ENCODE measurements at regions of chr7 and their contacts with region 1.

Region 1: GRCh38 chr7:148884299-148885022 is 370 bp upstream of the EZH2 start:
- DNase-seq: peak; percentile 95
- ATAC-seq: peak; percentile 93
- H3K4me3 Mint-ChIP-seq: peak overlapping the region; percentile 87
- H3K27ac Mint-ChIP-seq: peak overlapping the region; percentile 82
- H3K4me1 Mint-ChIP-seq: peaks cover 26% of the 10 kb centered on the region
- H3K27me3 Mint-ChIP-seq: no peaks in the 10 kb centered on the region
- CTCF ChIP-seq: no peak

Region 2: GRCh38 chr7:148799893-148800545 is 84.4 kb before region 1 on chr7:
- CTCF ChIA-PET with region 1: no interaction called
- POLR2A ChIA-PET with region 1: no interaction called
- intact Hi-C with region 1: no loop called
- DNase-seq: no peak
- ATAC-seq: no peak
- H3K4me3 Mint-ChIP-seq: no peak overlapping the region
- H3K27ac Mint-ChIP-seq: no peak overlapping the region
- H3K4me1 Mint-ChIP-seq: no peaks in the 10 kb centered on the region
- H3K27me3 Mint-ChIP-seq: no peaks in the 10 kb centered on the region
- CTCF ChIP-seq: no peak

Region 3: DNA sequence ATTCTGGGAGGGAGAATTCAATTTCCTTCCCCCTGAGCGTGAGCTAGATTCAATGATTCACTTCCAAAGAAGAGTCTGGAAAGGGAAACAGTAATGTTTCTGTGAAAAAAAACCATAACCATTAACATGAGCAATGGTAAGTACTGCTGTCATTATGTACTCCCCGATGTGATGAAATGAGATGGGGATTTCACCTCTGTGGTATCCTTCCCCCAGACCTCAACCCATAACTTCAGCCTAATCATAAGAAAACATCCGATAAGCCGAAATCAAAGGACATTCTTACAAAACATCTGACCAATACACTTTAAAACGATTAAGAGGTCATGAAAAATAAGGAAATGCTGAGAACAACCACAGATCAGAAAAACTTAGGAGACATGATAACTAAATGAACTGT is 27.6 kb before region 1 on chr7:
- CTCF ChIA-PET with region 1: interaction called, 9 read pairs
- POLR2A ChIA-PET with region 1: interaction called, 5 read pairs
- intact Hi-C with region 1: loop called (anchors 2 kb)
- DNase-seq: no peak
- ATAC-seq: no peak
- H3K4me3 Mint-ChIP-seq: no peak overlapping the region
- H3K27ac Mint-ChIP-seq: no peak overlapping the region
- H3K4me1 Mint-ChIP-seq: peaks cover 11% of the 10 kb centered on the region
- H3K27me3 Mint-ChIP-seq: no peaks in the 10 kb centered on the region
- CTCF ChIP-seq: no peak

Region 4: GRCh38 chr7:148914208-148914777 is 29.8 kb after region 1 on chr7:
- CTCF ChIA-PET with region 1: no interaction called
- POLR2A ChIA-PET with region 1: interaction called, 8 read pairs
- intact Hi-C with region 1: loop called (anchors 1 kb)
- DNase-seq: no peak
- ATAC-seq: peak; percentile 38
- H3K4me3 Mint-ChIP-seq: peak overlapping the region; percentile 57
- H3K27ac Mint-ChIP-seq: peak overlapping the region; percentile 75
- H3K4me1 Mint-ChIP-seq: peaks cover 42% of the 10 kb centered on the region
- H3K27me3 Mint-ChIP-seq: no peaks in the 10 kb centered on the region
- CTCF ChIP-seq: no peak

Region 5: DNA sequence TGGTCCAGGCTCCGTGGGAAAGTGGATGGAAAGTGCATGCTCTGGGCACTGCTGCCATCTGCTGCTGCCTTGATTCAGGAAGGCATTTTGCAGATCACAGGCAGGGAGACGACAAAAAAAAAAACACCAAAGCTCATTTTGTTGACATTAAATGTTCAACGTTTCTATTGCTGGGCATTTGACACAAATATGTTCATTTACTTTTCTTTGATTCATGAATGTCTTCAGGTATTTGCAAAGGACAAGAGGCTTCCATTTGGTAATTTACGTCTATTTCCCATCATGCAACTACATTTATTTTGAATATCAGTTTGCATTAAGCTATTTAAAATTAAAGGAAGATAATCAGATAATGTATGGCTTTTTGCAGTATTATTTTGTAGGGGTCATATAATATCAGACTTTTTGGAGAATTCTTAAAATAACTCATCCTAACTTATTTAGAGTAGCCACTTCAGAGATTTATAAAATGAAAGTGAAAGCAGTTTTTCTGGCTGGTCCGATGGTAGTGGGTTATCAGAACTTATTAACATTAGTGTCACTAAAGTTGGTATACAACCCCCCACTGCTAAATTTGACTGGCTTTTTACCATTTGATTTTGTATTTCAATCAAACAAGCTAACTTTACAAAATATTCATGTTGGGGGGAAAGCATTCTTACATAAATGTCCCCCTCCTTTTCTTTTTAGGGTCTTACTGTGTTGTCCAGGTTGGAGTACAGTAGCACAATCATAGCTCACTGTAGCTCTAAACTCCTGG is 78.5 kb after region 1 on chr7:
- CTCF ChIA-PET with region 1: interaction called, 3 read pairs
- POLR2A ChIA-PET with region 1: no interaction called
- intact Hi-C with region 1: loop called (anchors 1 kb)
- DNase-seq: no peak
- ATAC-seq: peak; percentile 53
- H3K4me3 Mint-ChIP-seq: peak overlapping the region; percentile 93
- H3K27ac Mint-ChIP-seq: peak overlapping the region; percentile 87
- H3K4me1 Mint-ChIP-seq: peaks cover 29% of the 10 kb centered on the region
- H3K27me3 Mint-ChIP-seq: no peaks in the 10 kb centered on the region
- CTCF ChIP-seq: no peak

Region 6: GRCh38 chr7:149028346-149029109 is 144.1 kb after region 1 on chr7 and contains the start of gene PDIA4:
- CTCF ChIA-PET with region 1: no interaction called
- POLR2A ChIA-PET with region 1: no interaction called
- intact Hi-C with region 1: loop called (anchors 1 kb)
- DNase-seq: peak; percentile 99
- ATAC-seq: peak; percentile 87
- H3K4me3 Mint-ChIP-seq: peak within 1 kb of the TSS; percentile 92
- H3K27ac Mint-ChIP-seq: peak within 1 kb of the TSS; percentile 89
- H3K4me1 Mint-ChIP-seq: peaks cover 39% of the 10 kb centered on the region
- H3K27me3 Mint-ChIP-seq: no peaks in the 10 kb centered on the region
- CTCF ChIP-seq: no peak
- total RNA-seq, gene PDIA4: 57.4 and 59.4 TPM in 2 replicates

Region 7: DNA sequence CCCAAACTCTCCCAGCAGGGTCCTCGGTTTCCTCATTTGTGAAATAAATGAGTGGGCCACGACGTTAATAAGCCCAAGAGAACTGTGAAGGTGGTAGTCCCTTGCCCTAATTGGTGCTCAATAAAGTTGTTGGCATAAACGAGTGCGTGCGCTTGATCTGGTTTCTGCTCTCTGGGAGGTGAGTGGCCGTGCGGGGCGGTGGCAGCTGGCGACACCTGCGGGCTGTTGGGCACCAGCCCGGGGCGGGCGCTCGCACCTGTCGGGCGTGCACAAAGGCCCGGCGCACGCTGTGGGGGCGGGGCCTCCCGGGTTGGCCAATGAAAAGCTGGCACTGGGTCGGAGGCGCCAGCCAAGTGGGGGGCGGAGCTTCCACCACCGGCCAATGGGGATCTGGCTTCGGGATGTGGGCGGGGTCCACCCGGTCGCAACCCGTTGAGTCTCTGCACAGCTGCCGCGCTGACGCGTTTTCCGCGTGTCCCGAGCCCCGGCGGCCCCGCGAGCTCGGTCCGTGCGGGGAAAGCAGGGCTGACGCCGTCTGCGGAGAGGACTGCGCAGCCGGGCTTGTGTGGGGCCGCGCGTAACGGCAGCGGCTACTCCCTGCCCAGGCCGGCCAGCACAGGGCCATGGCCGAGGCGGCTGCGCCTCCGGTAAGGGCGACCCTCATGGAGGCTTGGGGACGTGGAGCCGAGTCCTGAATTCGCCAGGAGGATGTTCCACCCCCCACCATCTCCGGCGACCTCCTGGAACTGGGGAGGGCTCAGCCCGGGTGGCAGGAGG is 400.6 kb after region 1 on chr7:
- CTCF ChIA-PET with region 1: no interaction called
- POLR2A ChIA-PET with region 1: no interaction called
- intact Hi-C with region 1: loop called (anchors 10 kb)
- DNase-seq: peak; percentile 95
- ATAC-seq: peak; percentile 99
- H3K4me3 Mint-ChIP-seq: peak overlapping the region; percentile 89
- H3K27ac Mint-ChIP-seq: no peak overlapping the region
- H3K4me1 Mint-ChIP-seq: peaks cover 27% of the 10 kb centered on the region
- H3K27me3 Mint-ChIP-seq: no peaks in the 10 kb centered on the region
- CTCF ChIP-seq: no peak